ENCODE measurements at regions of chr1 and their contacts with region 1.

Region 1: GRCh38 chr1:25099343-25099951 is 132.9 kb downstream of the SYF2 start:
- DNase-seq: peak; percentile 64 to 71
- ATAC-seq: peak; percentile 60 to 77 (median 74)
- H3K4me3 ChIP-seq: peak overlapping the region; percentile 2
- H3K4me3 Mint-ChIP-seq: peak overlapping the region; percentile 78
- H3K27ac ChIP-seq: peak overlapping the region; percentile 54
- H3K27ac Mint-ChIP-seq: peak overlapping the region; percentile 75 to 84
- H3K4me1 ChIP-seq: peaks cover 77% of the 10 kb centered on the region
- H3K4me1 Mint-ChIP-seq: peaks cover 65 to 74% of the 10 kb centered on the region in 2 donors
- H3K27me3 ChIP-seq: no peaks in the 10 kb centered on the region
- H3K27me3 Mint-ChIP-seq: peaks cover 30 to 44% of the 10 kb centered on the region in 2 donors
- CTCF ChIP-seq: no peak

Region 2: DNA sequence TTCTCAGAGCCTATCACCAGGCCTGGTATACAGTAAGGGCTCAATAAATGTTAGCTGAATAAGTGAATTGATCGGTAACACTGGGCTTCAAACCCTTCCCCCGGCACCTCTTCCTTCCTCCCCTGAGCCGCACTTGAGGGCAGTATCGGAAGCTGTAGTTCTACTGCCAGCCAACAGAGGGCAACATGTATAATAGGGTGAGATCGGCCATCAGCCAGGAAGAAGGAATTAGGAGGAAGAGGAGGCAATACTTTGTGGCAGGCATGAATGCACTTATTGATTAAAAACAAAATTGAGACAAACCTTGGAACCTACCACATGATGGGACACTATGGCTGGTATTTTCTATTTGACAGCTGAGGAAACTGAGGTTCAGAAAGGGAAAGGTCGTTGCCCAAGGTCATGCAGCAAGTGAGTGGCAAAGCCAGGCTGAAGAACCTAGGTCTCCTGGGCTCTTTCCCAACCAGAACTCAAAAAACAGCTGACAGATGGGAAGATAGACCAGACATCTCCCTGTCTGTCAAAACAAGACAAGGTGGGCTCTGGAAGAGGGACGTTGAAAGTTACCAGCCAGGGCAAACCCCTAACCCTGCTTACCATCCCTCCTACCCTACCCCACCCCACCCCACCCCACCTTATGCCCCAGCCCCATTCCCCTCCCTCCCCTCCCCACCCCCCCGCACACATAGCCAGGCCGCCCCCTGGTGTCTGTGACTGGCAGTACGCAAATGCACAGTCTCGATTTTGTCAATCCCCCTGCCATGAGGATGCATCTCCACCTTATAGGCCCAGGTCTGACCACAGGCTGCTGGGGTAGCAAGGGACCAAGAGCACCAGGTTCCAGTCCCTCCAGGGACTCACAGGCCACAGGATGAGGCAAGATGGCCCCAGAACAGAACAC is 62.0 kb before region 1 on chr1:
- intact Hi-C with region 1: loop called (anchors 1 kb)
- DNase-seq: peak in 1 of 2 donors; percentile 83
- ATAC-seq: no peak
- H3K4me3 ChIP-seq: no peak overlapping the region
- H3K4me3 Mint-ChIP-seq: no peak overlapping the region
- H3K27ac ChIP-seq: no peak overlapping the region
- H3K27ac Mint-ChIP-seq: peak overlapping the region in 1 of 2 donors; percentile 25
- H3K4me1 ChIP-seq: peaks cover 81% of the 10 kb centered on the region
- H3K4me1 Mint-ChIP-seq: peaks cover 38 to 45% of the 10 kb centered on the region in 2 donors
- H3K27me3 ChIP-seq: no peaks in the 10 kb centered on the region
- H3K27me3 Mint-ChIP-seq: peaks cover 14 to 17% of the 10 kb centered on the region in 2 donors
- CTCF ChIP-seq: peak; percentile 32